Sciatic nerve (tissue), 2 donors: ENCODE measurements at regions of chr2 and their contacts with region 1.

Region 1: GRCh38 chr2:14340703-14341102 is 291.8 kb upstream of the LRATD1 start:
- DNase-seq: no peak
- ATAC-seq: no peak

Region 2: DNA sequence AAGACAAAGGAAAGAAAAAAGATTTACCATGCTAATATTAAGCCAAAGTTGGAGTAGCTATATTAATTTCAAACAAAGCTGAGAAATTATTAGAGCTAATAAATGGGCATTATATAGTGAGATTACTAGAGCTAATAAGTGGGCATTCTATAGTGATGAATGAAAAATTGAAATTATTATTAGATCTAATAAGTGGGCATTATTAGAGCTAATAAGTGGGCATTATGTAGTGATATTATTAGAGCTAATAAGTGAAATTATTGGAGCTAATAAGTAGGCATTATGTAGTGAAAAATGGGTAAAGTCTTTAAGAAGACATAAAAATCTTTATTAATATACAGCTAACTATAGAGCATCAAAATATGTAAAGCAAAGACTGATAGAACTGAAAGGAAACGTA is 878.2 kb before region 1 on chr2:
- intact Hi-C with region 1: no loop called
- DNase-seq: no peak
- ATAC-seq: no peak

Region 3: GRCh38 chr2:14363137-14363536 is 22.4 kb after region 1 on chr2:
- intact Hi-C with region 1: loop called (anchors 2 kb)
- DNase-seq: no peak
- ATAC-seq: no peak

Region 4: GRCh38 chr2:14543295-14543694 is 202.6 kb after region 1 on chr2:
- intact Hi-C with region 1: no loop called
- DNase-seq: no peak
- ATAC-seq: no peak

Region 5: GRCh38 chr2:15485949-15486348 is 1145.2 kb after region 1 on chr2:
- intact Hi-C with region 1: no loop called
- DNase-seq: no peak
- ATAC-seq: no peak